ENCODE measurements at regions of chr6 and their contacts with region 1.

Region 1: DNA sequence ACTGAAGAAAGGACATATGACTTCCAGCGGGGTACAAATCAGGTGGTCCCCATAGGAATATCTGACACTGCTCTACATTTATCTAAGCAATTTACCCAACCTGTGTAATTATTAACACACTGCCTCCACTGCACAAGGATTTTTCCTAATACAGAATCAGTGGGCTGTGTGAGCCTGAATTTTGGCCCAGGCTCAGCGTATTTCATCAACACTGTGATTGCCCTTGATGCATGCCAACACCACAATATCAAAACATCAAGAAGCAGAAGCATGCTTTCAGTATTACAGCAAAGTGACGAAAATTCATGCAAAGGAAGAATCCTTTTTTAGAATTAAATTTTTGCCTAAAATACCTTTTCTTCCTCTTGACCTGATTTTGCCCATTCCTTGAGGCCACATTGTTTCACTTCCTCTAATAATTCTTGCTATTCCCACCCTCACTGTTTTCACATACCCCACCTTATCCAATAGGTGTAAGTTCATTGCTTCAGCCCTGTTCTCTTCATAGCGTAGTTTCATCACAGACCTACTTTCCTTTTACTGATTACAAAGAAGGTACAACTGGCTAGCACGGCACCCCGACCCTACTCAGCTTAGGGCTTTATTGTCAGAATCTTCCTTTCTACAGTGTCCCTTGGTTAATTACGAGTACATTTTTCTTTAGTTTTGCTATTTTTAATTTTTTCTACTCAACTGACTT is 83.7 kb upstream of the PTCHD4 start:
- DNase-seq: no peak
- H3K4me3 ChIP-seq: no peak overlapping the region
- H3K27ac ChIP-seq: no peak overlapping the region
- H3K4me1 ChIP-seq: no peaks in the 10 kb centered on the region
- H3K27me3 ChIP-seq: no peaks in the 10 kb centered on the region
- CTCF ChIP-seq: no peak

Region 2: GRCh38 chr6:47844881-47845280 is 349.9 kb before region 1 on chr6:
- CTCF ChIA-PET with region 1: no interaction called
- dilution Hi-C with region 1: no loop called
- in situ Hi-C with region 1: no loop called
- intact Hi-C with region 1: no loop called
- DNase-seq: no peak
- H3K4me3 ChIP-seq: no peak overlapping the region
- H3K27ac ChIP-seq: no peak overlapping the region
- H3K4me1 ChIP-seq: no peaks in the 10 kb centered on the region
- H3K27me3 ChIP-seq: peaks cover 3% of the 10 kb centered on the region
- CTCF ChIP-seq: no peak

Region 3: GRCh38 chr6:48151142-48151541 is 43.6 kb before region 1 on chr6:
- CTCF ChIA-PET with region 1: no interaction called
- dilution Hi-C with region 1: no loop called
- in situ Hi-C with region 1: no loop called
- intact Hi-C with region 1: loop called (anchors 1 kb)
- DNase-seq: peak; percentile 93
- H3K4me3 ChIP-seq: no peak overlapping the region
- H3K27ac ChIP-seq: peak overlapping the region; percentile 57
- H3K4me1 ChIP-seq: peaks cover 7% of the 10 kb centered on the region
- H3K27me3 ChIP-seq: no peaks in the 10 kb centered on the region
- CTCF ChIP-seq: no peak

Measured in mammary epithelial cell (primary cell).